Natural killer cell (primary cell): ENCODE measurements at regions of chr2 and their contacts with region 1.

Region 1: GRCh38 chr2:46010925-46011490 is 286.2 kb upstream of the EPAS1 start:
- DNase-seq: peak in 1 of 2 donors; percentile 54
- ATAC-seq: peak in 1 of 3 donors; percentile 53
- H3K4me3 ChIP-seq: no peak overlapping the region
- H3K4me3 Mint-ChIP-seq: no peak overlapping the region
- H3K27ac ChIP-seq: no peak overlapping the region
- H3K27ac Mint-ChIP-seq: no peak overlapping the region
- H3K4me1 ChIP-seq: no peaks in the 10 kb centered on the region
- H3K4me1 Mint-ChIP-seq: no peaks in the 10 kb centered on the region
- H3K27me3 ChIP-seq: no peaks in the 10 kb centered on the region
- H3K27me3 Mint-ChIP-seq: no peaks in the 10 kb centered on the region
- CTCF ChIP-seq: peak; percentile 46

Region 2: GRCh38 chr2:45919160-45919650 is 91.8 kb before region 1 on chr2:
- intact Hi-C with region 1: no loop called
- DNase-seq: no peak
- ATAC-seq: no peak
- H3K4me3 ChIP-seq: no peak overlapping the region
- H3K4me3 Mint-ChIP-seq: no peak overlapping the region
- H3K27ac ChIP-seq: no peak overlapping the region
- H3K27ac Mint-ChIP-seq: no peak overlapping the region
- H3K4me1 ChIP-seq: peaks cover 11% of the 10 kb centered on the region
- H3K4me1 Mint-ChIP-seq: peaks cover 5 to 16% of the 10 kb centered on the region in 2 donors
- H3K27me3 ChIP-seq: no peaks in the 10 kb centered on the region
- H3K27me3 Mint-ChIP-seq: no peaks in the 10 kb centered on the region
- CTCF ChIP-seq: no peak

Region 3: DNA sequence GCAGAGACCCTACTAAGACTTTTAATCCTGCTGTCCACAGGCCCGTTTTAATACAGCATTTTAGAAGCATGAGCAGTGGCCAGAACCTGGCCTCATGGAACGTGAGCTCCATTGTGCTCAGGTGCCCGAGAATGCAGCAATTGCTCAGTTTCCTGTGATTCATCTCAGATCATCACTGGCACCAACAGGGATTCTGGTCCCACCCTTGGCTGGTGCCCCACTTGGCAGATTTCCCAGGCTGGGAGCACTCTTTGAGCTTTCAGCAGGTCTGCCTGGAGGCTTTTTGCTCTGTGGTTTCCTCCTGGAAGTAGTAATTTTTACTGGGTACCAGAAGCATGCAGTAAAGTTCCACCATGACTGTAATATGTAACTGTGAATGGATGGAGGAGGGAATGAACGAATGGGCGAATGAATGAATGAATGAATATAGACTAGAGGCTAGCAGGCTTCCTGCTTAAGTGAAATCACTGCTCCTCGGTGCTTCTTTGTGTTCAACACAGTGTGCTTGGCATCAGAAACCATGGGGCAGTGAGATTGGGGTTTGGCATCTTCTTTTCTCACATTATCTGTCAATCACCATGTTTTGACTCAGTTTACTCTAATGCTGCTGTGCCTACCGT is 46.7 kb before region 1 on chr2:
- intact Hi-C with region 1: no loop called
- DNase-seq: no peak
- ATAC-seq: no peak
- H3K4me3 ChIP-seq: no peak overlapping the region
- H3K4me3 Mint-ChIP-seq: no peak overlapping the region
- H3K27ac ChIP-seq: no peak overlapping the region
- H3K27ac Mint-ChIP-seq: no peak overlapping the region
- H3K4me1 ChIP-seq: no peaks in the 10 kb centered on the region
- H3K4me1 Mint-ChIP-seq: peaks cover 12 to 13% of the 10 kb centered on the region in 2 donors
- H3K27me3 ChIP-seq: no peaks in the 10 kb centered on the region
- H3K27me3 Mint-ChIP-seq: no peaks in the 10 kb centered on the region
- CTCF ChIP-seq: no peak

Region 4: GRCh38 chr2:46134531-46135181 is 123.6 kb after region 1 on chr2:
- intact Hi-C with region 1: no loop called
- DNase-seq: no peak
- ATAC-seq: no peak
- H3K4me3 ChIP-seq: no peak overlapping the region
- H3K4me3 Mint-ChIP-seq: no peak overlapping the region
- H3K27ac ChIP-seq: no peak overlapping the region
- H3K27ac Mint-ChIP-seq: no peak overlapping the region
- H3K4me1 ChIP-seq: no peaks in the 10 kb centered on the region
- H3K4me1 Mint-ChIP-seq: no peaks in the 10 kb centered on the region
- H3K27me3 ChIP-seq: no peaks in the 10 kb centered on the region
- H3K27me3 Mint-ChIP-seq: no peaks in the 10 kb centered on the region
- CTCF ChIP-seq: no peak

Region 5: GRCh38 chr2:46364797-46365457 is 353.9 kb after region 1 on chr2:
- intact Hi-C with region 1: loop called (anchors 2 kb)
- DNase-seq: peak in 1 of 2 donors; percentile 78
- ATAC-seq: peak in 1 of 3 donors; percentile 27
- H3K4me3 ChIP-seq: no peak overlapping the region
- H3K4me3 Mint-ChIP-seq: no peak overlapping the region
- H3K27ac ChIP-seq: no peak overlapping the region
- H3K27ac Mint-ChIP-seq: no peak overlapping the region
- H3K4me1 ChIP-seq: peaks cover 23% of the 10 kb centered on the region
- H3K4me1 Mint-ChIP-seq: peaks cover 37% of the 10 kb centered on the region in 2 donors
- H3K27me3 ChIP-seq: no peaks in the 10 kb centered on the region
- H3K27me3 Mint-ChIP-seq: peaks cover 13 to 23% of the 10 kb centered on the region in 2 donors
- CTCF ChIP-seq: peak; percentile 92

Region 6: DNA sequence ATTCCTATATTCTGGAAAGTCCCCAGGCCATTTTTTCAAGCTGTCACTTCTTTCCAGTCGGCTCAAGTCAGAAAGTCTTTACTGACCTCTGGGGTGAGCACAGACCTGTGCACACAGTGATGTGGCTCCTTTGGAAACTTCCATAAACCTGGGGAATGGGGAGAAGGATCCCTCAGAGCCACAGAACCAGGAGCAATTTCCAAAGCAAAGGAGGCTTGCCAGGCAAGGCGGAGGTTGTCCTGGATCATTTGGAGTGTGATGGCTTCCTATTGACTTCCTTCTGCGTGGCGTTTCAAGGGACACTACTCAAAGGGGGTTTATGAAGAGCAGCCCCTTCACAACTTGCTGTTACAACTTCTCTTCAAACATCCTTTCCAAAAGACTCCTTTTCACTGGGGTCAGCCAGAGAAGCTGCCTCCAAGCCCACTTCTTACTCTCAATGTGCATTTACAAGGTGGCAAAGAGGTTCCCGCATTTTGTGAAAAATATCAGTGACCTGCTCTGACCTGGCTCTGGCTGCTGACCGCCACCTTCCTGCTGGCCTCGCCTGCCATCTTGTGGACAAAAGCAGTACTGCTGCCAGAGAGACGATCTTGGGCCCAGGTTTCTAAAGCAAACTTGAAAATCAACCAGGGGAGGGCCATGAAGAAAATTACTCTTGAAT is 450.1 kb after region 1 on chr2:
- intact Hi-C with region 1: loop called (anchors 1 kb)
- DNase-seq: peak; percentile 80 to 83
- ATAC-seq: peak; percentile 77 to 82 (median 81)
- H3K4me3 ChIP-seq: no peak overlapping the region
- H3K4me3 Mint-ChIP-seq: no peak overlapping the region
- H3K27ac ChIP-seq: no peak overlapping the region
- H3K27ac Mint-ChIP-seq: peak overlapping the region in 1 of 2 donors; percentile 0
- H3K4me1 ChIP-seq: peaks cover 10% of the 10 kb centered on the region
- H3K4me1 Mint-ChIP-seq: peaks cover 16% of the 10 kb centered on the region in 2 donors
- H3K27me3 ChIP-seq: no peaks in the 10 kb centered on the region
- H3K27me3 Mint-ChIP-seq: peaks cover 5 to 7% of the 10 kb centered on the region in 2 donors
- CTCF ChIP-seq: peak; percentile 99